BJ (cell line): ENCODE measurements at regions of chr14 and their contacts with region 1.

Region 1: GRCh38 chr14:74612350-74613021 is 449 bp upstream of the LTBP2 start:
- DNase-seq: no peak
- H3K4me3 ChIP-seq: peak overlapping the region; percentile 69
- H3K27me3 ChIP-seq: no peaks in the 10 kb centered on the region
- CTCF ChIP-seq: peak; percentile 62

Region 2: GRCh38 chr14:74425525-74426201 is 186.8 kb before region 1 on chr14:
- CTCF ChIA-PET with region 1: no interaction called
- POLR2A ChIA-PET with region 1: no interaction called
- DNase-seq: no peak
- H3K4me3 ChIP-seq: no peak overlapping the region
- H3K27me3 ChIP-seq: peaks cover 15% of the 10 kb centered on the region
- CTCF ChIP-seq: no peak

Region 3: DNA sequence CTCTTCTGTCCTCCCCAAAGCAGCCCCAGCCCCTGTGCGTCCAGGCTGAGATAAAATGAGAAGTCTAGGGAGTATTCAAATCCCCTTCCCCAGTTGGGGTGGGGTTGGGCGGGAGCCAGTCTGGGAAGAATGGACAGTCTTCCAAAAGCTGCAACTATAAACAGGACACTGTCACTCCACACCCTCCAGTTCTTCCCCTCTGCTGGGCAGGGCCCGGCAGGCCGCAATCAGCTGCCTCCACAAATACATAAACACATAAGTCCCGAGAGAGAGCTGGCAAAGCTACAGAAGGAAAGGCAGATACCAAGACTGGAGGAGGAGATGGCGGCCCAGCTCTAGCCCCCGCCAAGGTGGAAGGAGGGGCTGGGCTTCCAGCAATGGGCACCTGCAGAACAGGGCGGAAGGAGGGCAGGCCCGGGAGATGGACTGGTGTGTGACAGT is 13.1 kb before region 1 on chr14:
- CTCF ChIA-PET with region 1: interaction called, 13 read pairs
- POLR2A ChIA-PET with region 1: no interaction called
- DNase-seq: no peak
- H3K4me3 ChIP-seq: no peak overlapping the region
- H3K27me3 ChIP-seq: no peaks in the 10 kb centered on the region
- CTCF ChIP-seq: no peak

Region 4: GRCh38 chr14:74647678-74648461 is 35.4 kb after region 1 on chr14:
- CTCF ChIA-PET with region 1: interaction called, 37 read pairs
- POLR2A ChIA-PET with region 1: no interaction called
- DNase-seq: no peak
- H3K4me3 ChIP-seq: no peak overlapping the region
- H3K27me3 ChIP-seq: no peaks in the 10 kb centered on the region
- CTCF ChIP-seq: no peak

Region 5: GRCh38 chr14:74671789-74672188 is 59.3 kb after region 1 on chr14:
- CTCF ChIA-PET with region 1: interaction called, 22 read pairs
- POLR2A ChIA-PET with region 1: no interaction called
- DNase-seq: no peak
- H3K4me3 ChIP-seq: no peak overlapping the region
- H3K27me3 ChIP-seq: no peaks in the 10 kb centered on the region
- CTCF ChIP-seq: no peak

Region 6: DNA sequence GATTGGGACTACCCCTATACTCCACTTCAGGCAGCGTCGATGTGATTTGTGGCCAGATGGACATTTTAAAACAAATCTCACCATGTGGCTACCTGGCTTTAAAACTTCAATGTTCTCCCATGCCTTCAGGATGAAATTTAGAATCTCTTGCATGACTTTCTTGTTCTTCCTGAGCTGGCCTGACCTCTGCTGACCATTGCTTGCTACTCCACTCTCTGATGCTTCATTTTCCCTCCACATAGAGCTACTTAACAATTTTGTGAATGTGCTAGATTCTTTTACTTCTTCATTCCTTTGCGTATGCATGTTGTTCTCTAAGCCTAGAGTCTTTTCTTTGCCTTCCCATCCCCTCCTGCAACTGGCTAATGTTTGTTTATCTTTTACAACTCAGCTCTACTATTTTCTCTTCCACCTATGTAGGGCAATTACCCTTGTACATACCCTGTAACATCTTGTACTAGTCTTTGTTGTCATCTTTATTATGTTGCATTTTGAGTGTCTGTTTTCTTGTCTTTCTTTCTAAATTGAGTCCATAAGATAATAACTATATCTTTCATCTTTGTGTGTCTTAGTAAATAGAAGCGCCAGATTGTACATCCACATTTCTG is 191.8 kb after region 1 on chr14:
- CTCF ChIA-PET with region 1: interaction called, 117 read pairs
- POLR2A ChIA-PET with region 1: no interaction called
- DNase-seq: peak; percentile 13
- H3K4me3 ChIP-seq: no peak overlapping the region
- H3K27me3 ChIP-seq: no peaks in the 10 kb centered on the region
- CTCF ChIP-seq: peak; percentile 76